ENCODE measurements at regions of chr14 and their contacts with region 1.

Region 1: DNA sequence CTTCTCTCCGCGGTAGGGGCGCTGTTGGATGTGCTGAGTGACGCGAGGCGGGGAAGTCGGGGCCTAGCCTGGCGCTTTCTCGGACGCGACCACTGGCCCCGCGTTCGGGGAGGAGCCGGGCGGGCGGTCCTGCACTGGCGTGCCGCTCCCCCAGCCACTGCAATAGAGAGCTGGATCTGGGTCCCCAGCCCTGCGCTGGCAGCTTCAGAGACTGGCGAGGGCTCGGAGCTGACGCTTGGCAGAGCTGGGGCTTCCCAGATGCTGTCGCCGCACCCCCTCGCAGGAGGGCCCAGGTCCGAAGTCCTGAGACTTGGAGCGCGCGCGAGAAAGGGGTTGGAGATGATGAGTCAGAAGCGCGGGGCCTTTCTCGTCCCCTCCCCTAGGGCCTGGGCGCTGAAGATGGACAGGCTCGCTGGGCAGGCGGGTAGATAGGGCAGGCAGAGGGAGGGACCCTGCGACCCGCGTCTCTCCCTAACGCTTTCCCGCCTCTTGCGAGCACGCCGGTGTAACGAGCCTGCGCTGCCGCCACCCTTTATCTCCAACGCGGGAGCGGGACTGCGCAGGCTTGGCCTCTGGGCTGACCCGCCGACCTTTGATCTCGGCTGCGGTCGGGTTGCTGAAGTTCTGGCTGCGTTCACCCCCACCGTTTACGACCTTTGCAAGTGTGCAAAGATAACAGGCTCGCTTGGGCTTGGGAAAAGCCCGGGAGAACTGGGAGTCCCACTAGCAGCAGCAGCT is 3.0 kb downstream of the TMEM253 start:
- DNase-seq: peak; percentile 97 to 99 (median 97)
- ATAC-seq: peak; percentile 96 to 97
- H3K4me3 ChIP-seq: peak overlapping the region; percentile 54
- H3K27ac ChIP-seq: peak overlapping the region; percentile 92
- H3K4me1 ChIP-seq: no peaks in the 10 kb centered on the region
- H3K27me3 ChIP-seq: no peaks in the 10 kb centered on the region

Region 2: GRCh38 chr14:20782280-20782890 is 321.5 kb before region 1 on chr14:
- intact Hi-C with region 1: no loop called
- DNase-seq: no peak
- ATAC-seq: peak; percentile 41 to 64
- H3K4me3 ChIP-seq: peak overlapping the region; percentile 14
- H3K27ac ChIP-seq: no peak overlapping the region
- H3K4me1 ChIP-seq: no peaks in the 10 kb centered on the region
- H3K27me3 ChIP-seq: no peaks in the 10 kb centered on the region

Region 3: DNA sequence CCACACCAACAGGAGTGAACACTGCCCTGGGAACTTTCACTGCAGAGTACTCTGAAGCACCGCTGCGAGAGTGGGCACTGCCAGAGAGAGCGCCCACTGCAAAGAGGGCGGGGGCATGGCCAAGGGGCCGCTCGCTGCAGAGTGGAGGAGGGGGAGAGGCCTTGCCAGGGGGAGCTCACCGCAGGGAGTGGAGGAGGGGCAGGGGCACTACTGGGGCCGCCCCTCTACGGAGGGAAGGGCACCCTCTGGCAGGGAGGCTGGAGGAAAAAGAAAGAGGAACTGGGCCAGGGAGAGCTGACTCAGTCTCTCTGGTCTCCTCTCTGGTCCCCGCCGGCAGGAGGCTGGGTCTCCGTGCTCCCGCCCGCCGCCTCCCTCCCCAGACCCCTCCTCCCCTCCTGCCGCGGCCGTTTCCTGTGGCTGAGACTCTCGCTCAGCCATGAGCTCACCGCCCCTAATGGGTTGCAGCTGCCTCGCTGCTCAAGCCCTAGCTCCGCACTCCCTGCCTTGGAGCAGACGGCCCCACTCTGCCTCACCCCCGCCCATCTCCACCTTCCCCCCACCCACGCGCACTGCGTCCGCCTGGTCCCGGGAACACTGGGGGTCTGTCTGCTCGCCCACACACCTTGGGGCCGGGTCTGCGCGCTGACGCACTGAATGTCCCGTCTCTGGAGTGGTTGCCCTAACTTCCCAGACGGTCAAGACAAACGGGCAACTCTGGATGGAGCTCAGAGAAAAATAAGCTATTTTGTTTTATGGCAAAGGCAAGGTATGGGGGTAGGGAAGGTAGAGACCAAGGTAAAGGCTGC is 32.5 kb before region 1 on chr14:
- intact Hi-C with region 1: loop called in 3 of 4 experiments (anchors 2 to 5 kb)
- DNase-seq: peak; percentile 93 to 96 (median 93)
- ATAC-seq: peak; percentile 78 to 79
- H3K4me3 ChIP-seq: peak overlapping the region; percentile 70
- H3K27ac ChIP-seq: peak overlapping the region; percentile 78
- H3K4me1 ChIP-seq: peaks cover 3% of the 10 kb centered on the region
- H3K27me3 ChIP-seq: no peaks in the 10 kb centered on the region